Body of pancreas (tissue), 4 donors: ENCODE measurements at regions of chr18 and their contacts with region 1.

Region 1: GRCh38 chr18:76881744-76882143 is 59.4 kb downstream of the ZNF236 start:
- DNase-seq: no peak
- ATAC-seq: no peak
- H3K4me3 ChIP-seq: no peak overlapping the region
- H3K27ac ChIP-seq: no peak overlapping the region
- H3K4me1 ChIP-seq: no peaks in the 10 kb centered on the region
- H3K27me3 ChIP-seq: no peaks in the 10 kb centered on the region
- CTCF ChIP-seq: no peak
- POLR2A ChIP-seq: no peak

Region 2: DNA sequence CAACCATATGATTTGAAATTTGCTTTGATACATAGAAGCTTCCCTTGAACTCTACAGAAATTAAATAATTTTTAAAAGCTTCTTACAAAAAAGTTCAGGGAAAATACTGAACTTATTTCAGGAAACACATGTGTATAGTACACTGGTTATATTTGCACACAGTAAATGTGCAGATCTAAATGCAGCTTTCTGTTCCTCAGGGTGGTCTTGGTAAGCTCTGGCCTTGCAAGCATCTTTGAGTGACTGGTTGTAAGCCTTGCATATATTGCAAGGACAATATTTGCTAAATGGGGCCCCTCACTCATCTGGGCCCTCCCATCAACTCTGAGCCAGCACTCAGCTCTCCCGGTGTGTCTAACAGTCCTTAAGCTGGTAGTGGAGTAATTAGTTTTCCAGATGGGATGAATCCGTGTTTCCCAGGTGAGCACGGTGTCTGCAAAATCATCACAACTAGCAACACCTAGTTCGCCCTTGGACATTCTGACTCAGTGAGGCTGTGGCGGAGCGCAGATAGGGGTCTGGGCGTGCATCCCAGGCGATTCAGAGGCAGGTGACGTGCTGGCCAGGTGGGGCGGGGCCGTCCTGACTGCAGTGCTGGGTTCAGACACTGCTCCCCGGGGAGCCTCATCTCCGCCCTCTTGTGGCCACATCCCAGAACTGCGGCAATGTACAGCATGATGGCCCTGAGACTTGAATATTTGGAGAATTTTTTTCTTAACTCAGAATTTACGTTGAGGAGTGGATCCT is 101.3 kb after region 1 on chr18:
- intact Hi-C with region 1: loop called (anchors 10 kb)
- DNase-seq: peak; percentile 89 to 94 (median 90)
- ATAC-seq: peak; percentile 88
- H3K4me3 ChIP-seq: no peak overlapping the region
- H3K27ac ChIP-seq: no peak overlapping the region
- H3K4me1 ChIP-seq: peaks cover 16% of the 10 kb centered on the region
- H3K27me3 ChIP-seq: no peaks in the 10 kb centered on the region
- CTCF ChIP-seq: peak; percentile 85 to 93 (median 90)
- POLR2A ChIP-seq: no peak